Heart left ventricle (tissue), 16 donors: ENCODE measurements at regions of chr12 and their contacts with region 1.

Region 1: DNA sequence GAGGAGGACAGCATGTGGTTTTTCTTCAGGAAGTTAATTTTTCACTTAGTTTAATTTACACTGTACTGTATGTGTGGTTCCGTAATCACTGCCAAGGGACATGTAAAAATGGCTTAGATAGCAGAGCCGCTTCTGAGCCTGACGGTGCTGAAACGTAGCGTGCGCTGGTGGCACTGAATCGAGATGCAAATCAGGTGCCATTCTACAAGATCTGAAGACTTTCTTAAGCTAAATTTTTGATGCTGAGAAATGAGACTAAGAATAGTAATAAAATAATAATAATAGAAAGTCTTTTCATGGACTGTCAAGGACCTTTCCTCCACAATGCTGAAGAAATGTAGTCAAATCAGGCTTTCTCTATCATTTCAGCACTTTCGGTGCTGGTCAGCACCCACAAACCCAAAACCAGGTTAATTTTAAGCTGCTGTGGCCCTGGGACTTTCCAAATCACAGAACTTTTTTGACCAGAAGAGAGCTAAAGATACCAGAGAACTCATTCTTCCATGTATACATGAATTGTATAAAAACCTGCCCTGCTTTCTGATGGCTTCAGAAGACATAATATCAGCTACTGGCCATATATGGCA is 183.3 kb upstream of the LMO3 start:
- DNase-seq: no peak
- ATAC-seq: no peak
- H3K4me3 ChIP-seq: no peak overlapping the region
- H3K27ac ChIP-seq: no peak overlapping the region
- H3K4me1 ChIP-seq: no peaks in the 10 kb centered on the region
- H3K27me3 ChIP-seq: no peaks in the 10 kb centered on the region
- CTCF ChIP-seq: no peak
- POLR2A ChIP-seq: no peak

Region 2: GRCh38 chr12:16384732-16385131 is 404.6 kb before region 1 on chr12:
- intact Hi-C with region 1: no loop called
- DNase-seq: no peak
- ATAC-seq: no peak
- H3K4me3 ChIP-seq: no peak overlapping the region
- H3K27ac ChIP-seq: no peak overlapping the region
- H3K4me1 ChIP-seq: no peaks in the 10 kb centered on the region
- H3K27me3 ChIP-seq: peaks cover 0 to 8% (median 0%) of the 10 kb centered on the region in 9 donors
- CTCF ChIP-seq: no peak
- POLR2A ChIP-seq: no peak

Region 3: GRCh38 chr12:16844875-16845274 is 55.6 kb after region 1 on chr12:
- intact Hi-C with region 1: loop called in 1 of 10 experiments (anchors 2 kb)
- DNase-seq: no peak
- ATAC-seq: no peak
- H3K4me3 ChIP-seq: no peak overlapping the region
- H3K27ac ChIP-seq: no peak overlapping the region
- H3K4me1 ChIP-seq: no peaks in the 10 kb centered on the region
- H3K27me3 ChIP-seq: no peaks in the 10 kb centered on the region
- CTCF ChIP-seq: no peak
- POLR2A ChIP-seq: no peak